MCF 10A (cell line): ENCODE measurements at regions of chr12 and their contacts with region 1.

Region 1: DNA sequence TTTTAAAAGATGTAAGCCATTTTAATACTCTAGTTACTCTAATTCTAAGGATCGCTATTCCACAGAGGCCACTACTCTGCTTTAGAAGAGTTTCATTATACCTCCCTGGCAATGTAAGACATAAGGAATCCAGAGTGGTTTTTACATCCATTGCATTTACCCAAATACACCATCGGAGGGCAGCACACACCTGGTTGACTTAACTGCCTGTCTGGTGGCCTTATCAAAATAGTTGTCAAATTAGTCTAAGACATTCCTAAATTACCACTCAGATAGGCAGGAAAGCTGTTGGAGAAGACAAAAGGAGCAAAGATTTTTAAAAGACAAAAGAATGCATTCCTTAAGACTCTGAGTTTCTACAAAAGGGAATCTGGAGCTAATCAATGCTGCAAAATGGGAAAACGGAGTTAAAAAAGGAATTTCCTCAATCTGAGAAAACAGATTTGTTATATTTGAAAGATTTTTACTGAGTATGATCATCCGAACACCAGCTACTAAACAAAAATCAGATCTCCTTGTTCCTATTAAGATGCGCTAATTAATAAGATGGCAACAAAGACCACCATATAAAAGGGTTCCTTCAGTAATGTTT is 33.8 kb upstream of the FGD4 start:
- DNase-seq: peak; percentile 81
- H3K4me3 Mint-ChIP-seq: no peak overlapping the region
- H3K27ac Mint-ChIP-seq: no peak overlapping the region
- H3K4me1 Mint-ChIP-seq: peaks cover 5% of the 10 kb centered on the region
- H3K27me3 Mint-ChIP-seq: no peaks in the 10 kb centered on the region
- CTCF ChIP-seq: peak; percentile 85

Region 2: GRCh38 chr12:32252199-32253073 is 113.1 kb before region 1 on chr12:
- CTCF ChIA-PET with region 1: no interaction called
- POLR2A ChIA-PET with region 1: no interaction called
- intact Hi-C with region 1: no loop called
- DNase-seq: no peak
- H3K4me3 Mint-ChIP-seq: no peak overlapping the region
- H3K27ac Mint-ChIP-seq: no peak overlapping the region
- H3K4me1 Mint-ChIP-seq: peaks cover 6% of the 10 kb centered on the region
- H3K27me3 Mint-ChIP-seq: no peaks in the 10 kb centered on the region
- CTCF ChIP-seq: no peak

Region 3: GRCh38 chr12:32377344-32378055 is 11.9 kb after region 1 on chr12:
- CTCF ChIA-PET with region 1: interaction called, 10 read pairs
- POLR2A ChIA-PET with region 1: interaction called, 4 read pairs
- intact Hi-C with region 1: no loop called
- DNase-seq: no peak
- H3K4me3 Mint-ChIP-seq: no peak overlapping the region
- H3K27ac Mint-ChIP-seq: no peak overlapping the region
- H3K4me1 Mint-ChIP-seq: no peaks in the 10 kb centered on the region
- H3K27me3 Mint-ChIP-seq: no peaks in the 10 kb centered on the region
- CTCF ChIP-seq: no peak

Region 4: GRCh38 chr12:32659908-32660440 is 294.4 kb after region 1 on chr12:
- CTCF ChIA-PET with region 1: interaction called, 27 read pairs
- POLR2A ChIA-PET with region 1: interaction called, 3 read pairs
- intact Hi-C with region 1: loop called (anchors 1 kb)
- DNase-seq: no peak
- H3K4me3 Mint-ChIP-seq: no peak overlapping the region
- H3K27ac Mint-ChIP-seq: no peak overlapping the region
- H3K4me1 Mint-ChIP-seq: no peaks in the 10 kb centered on the region
- H3K27me3 Mint-ChIP-seq: no peaks in the 10 kb centered on the region
- CTCF ChIP-seq: no peak

Region 5: DNA sequence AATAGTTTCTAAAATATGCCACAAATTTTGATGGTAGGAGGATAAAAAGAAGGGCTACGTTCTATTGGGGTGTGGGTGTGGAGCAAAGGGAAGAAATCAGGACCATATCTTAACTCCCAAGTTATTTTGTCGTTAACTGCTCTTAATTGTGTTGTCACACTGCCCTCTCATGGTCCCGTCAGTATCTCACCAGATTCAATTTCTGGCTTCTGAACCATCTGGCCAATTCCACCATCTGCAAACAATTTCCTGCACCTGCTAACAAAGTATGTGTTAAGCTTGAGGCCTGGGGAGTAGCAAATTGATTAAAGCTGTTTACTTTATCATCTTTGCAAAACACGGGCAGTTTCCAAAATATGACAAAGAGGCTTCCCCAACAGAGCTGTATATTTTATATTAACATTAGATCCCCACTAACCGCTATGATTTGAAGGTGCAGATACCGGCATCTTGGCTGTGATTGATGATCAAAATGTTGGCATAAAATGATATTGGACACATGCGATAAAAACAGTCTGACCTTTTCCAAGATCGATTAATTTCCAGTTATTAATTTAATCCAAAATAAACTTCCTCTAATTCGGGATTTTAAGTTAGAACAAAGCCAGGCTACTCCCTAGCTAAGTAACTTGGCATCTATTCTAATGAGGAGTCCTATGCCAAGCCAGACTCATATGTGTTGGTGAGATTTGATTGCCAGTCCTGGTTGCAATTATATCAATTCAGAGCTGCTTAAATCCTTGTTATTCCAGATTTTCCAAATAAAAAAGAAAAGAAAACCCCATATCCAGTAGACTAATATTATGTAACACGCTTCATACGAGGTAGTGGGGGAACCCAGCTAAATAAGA is 306.6 kb after region 1 on chr12:
- CTCF ChIA-PET with region 1: interaction called, 97 read pairs
- POLR2A ChIA-PET with region 1: interaction called, 5 read pairs
- intact Hi-C with region 1: loop called (anchors 1 kb)
- DNase-seq: peak; percentile 70
- H3K4me3 Mint-ChIP-seq: no peak overlapping the region
- H3K27ac Mint-ChIP-seq: no peak overlapping the region
- H3K4me1 Mint-ChIP-seq: no peaks in the 10 kb centered on the region
- H3K27me3 Mint-ChIP-seq: no peaks in the 10 kb centered on the region
- CTCF ChIP-seq: peak; percentile 62